ENCODE measurements at regions of chr2 and their contacts with region 1.

Region 1: GRCh38 chr2:230068016-230068650 is 591 bp downstream of the SLC16A14 start:
- DNase-seq: peak; percentile 45
- H3K4me3 Mint-ChIP-seq: peak overlapping the region; percentile 72
- H3K27ac Mint-ChIP-seq: no peak overlapping the region
- H3K4me1 Mint-ChIP-seq: peaks cover 9% of the 10 kb centered on the region
- H3K27me3 Mint-ChIP-seq: no peaks in the 10 kb centered on the region
- CTCF ChIP-seq: peak; percentile 21

Region 2: DNA sequence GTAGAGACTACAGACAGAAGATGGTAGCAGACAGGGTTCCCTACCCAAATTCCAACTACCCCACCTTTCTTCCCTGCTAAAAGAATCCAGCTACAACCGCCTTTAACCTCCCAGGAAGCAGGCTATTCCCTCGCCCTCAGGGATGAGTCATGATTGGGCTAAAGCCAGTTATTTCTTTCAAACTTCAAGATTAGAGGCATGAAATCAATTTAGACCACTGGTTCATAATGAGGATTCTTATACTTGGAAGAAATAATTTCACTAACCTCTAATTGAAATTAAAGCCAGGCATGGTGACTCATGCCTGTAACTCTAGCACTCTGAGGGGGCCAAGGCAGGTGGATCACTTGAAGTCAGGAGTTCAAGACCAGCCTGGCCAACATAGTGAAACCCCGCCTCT is 166.3 kb before region 1 on chr2:
- CTCF ChIA-PET with region 1: no interaction called
- POLR2A ChIA-PET with region 1: no interaction called
- intact Hi-C with region 1: no loop called
- DNase-seq: peak; percentile 90
- H3K4me3 Mint-ChIP-seq: no peak overlapping the region
- H3K27ac Mint-ChIP-seq: peak overlapping the region; percentile 68
- H3K4me1 Mint-ChIP-seq: peaks cover 22% of the 10 kb centered on the region
- H3K27me3 Mint-ChIP-seq: no peaks in the 10 kb centered on the region
- CTCF ChIP-seq: no peak

Region 3: GRCh38 chr2:230007931-230008707 is 60.0 kb before region 1 on chr2:
- CTCF ChIA-PET with region 1: interaction called, 15 read pairs
- POLR2A ChIA-PET with region 1: interaction called, 3 read pairs
- intact Hi-C with region 1: loop called (anchors 1 kb)
- DNase-seq: peak; percentile 82
- H3K4me3 Mint-ChIP-seq: no peak overlapping the region
- H3K27ac Mint-ChIP-seq: no peak overlapping the region
- H3K4me1 Mint-ChIP-seq: peaks cover 5% of the 10 kb centered on the region
- H3K27me3 Mint-ChIP-seq: no peaks in the 10 kb centered on the region
- CTCF ChIP-seq: peak; percentile 84

Region 4: DNA sequence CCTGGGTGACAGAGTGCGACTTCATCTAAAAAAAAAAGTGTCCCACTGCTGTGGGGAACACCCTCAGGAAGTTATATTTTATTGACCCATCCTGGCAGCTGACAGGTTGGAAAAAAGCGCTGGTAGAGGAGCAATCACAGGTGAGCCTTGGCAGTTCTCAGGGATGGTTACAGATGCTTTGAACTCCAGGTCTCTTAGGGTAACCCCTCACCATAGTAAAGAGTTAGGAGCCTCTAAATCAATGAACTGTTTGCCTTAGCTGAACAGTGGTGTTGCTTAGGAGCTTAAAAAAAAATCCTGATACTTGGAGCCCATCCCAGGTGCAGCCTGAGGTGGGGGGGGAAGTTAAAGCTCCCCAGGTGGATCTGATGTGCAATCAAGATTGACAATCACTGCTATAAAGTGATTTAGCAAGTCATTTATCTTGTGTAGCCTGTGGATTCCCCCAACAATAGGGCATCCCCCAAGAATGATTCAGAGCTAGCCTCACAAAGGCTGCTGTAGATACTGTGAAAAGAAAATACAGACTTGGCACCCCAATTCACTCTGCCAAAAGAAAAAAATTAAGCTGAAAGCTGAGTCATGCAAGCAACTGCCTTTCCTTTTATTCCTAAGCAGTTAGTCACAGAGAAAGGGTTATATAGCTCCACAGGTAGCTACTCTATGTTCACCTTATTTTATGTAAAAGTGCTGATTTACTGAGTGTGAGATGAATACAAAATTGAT is 14.2 kb before region 1 on chr2:
- CTCF ChIA-PET with region 1: interaction called, 13 read pairs
- POLR2A ChIA-PET with region 1: interaction called, 11 read pairs
- intact Hi-C with region 1: no loop called
- DNase-seq: peak; percentile 79
- H3K4me3 Mint-ChIP-seq: no peak overlapping the region
- H3K27ac Mint-ChIP-seq: no peak overlapping the region
- H3K4me1 Mint-ChIP-seq: peaks cover 11% of the 10 kb centered on the region
- H3K27me3 Mint-ChIP-seq: no peaks in the 10 kb centered on the region
- CTCF ChIP-seq: no peak

Region 5: GRCh38 chr2:230160112-230160660 is 92.1 kb after region 1 on chr2:
- CTCF ChIA-PET with region 1: interaction called, 4 read pairs
- POLR2A ChIA-PET with region 1: no interaction called
- intact Hi-C with region 1: loop called (anchors 2 kb)
- DNase-seq: peak; percentile 65
- H3K4me3 Mint-ChIP-seq: no peak overlapping the region
- H3K27ac Mint-ChIP-seq: no peak overlapping the region
- H3K4me1 Mint-ChIP-seq: no peaks in the 10 kb centered on the region
- H3K27me3 Mint-ChIP-seq: no peaks in the 10 kb centered on the region
- CTCF ChIP-seq: peak; percentile 72